Dorsolateral prefrontal cortex (tissue), 120 donors: ENCODE measurements at regions of chr15 and their contacts with region 1.

Region 1: DNA sequence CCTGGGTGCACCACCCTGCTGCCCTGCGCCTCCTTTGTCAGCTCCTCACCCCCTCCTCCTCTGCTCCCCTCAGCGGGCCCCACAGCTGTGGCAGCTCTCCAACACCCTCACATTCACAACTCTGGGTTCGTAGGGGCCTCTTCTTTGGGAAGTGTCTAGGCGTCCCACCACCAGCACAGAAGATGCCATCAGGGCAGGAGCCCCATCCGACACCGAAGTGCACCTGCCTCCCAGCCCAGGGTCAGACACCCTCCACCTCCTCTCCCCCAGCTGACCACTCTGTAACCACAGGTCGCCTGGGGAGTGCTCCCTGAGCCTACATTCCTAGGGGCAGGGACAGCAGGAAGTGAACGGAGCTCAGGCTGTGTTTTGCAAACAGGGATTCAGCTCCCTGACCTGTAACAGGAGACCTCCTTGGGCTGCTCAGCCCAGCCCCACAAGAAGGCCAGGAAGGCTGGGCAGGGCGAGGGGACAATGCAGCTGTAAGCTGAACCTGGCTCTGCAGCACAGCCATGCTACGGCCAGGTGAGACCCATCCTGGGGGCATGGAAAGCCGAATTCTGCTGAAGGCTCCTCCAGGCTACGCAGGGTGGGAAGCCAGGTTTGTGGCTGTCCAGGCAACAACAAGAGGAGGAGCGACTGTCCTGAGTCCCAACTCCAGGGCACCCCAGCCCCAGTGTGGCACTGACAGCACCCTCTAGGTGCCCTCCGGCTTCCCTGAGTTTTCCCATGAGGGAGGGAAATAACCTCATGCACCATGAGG is 269.0 kb downstream of the GOLGA6L6 start:
- DNase-seq: peak in 3 of 10 donors; percentile 41 to 54 (median 48)
- H3K4me3 ChIP-seq: no peak overlapping the region
- H3K27ac ChIP-seq: no peak overlapping the region
- H3K27me3 ChIP-seq: peaks cover 0 to 100% (median 53%) of the 10 kb centered on the region in 45 donors
- CTCF ChIP-seq: no peak

Region 2: GRCh38 chr15:20340931-20341661 is 68.5 kb after region 1 on chr15:
- intact Hi-C with region 1: no loop called
- DNase-seq: peak; percentile 62 to 99 (median 82)
- H3K4me3 ChIP-seq: no peak overlapping the region
- H3K27ac ChIP-seq: no peak overlapping the region
- H3K27me3 ChIP-seq: peaks cover 0 to 41% (median 1%) of the 10 kb centered on the region in 45 donors
- CTCF ChIP-seq: no peak

Region 3: GRCh38 chr15:20376872-20377271 is 104.3 kb after region 1 on chr15:
- intact Hi-C with region 1: loop called in 1 of 2 experiments (anchors 10 kb)
- DNase-seq: no peak
- H3K4me3 ChIP-seq: no peak overlapping the region
- H3K27ac ChIP-seq: peak overlapping the region in 5 of 59 donors; percentile 5 to 33 (median 8)
- H3K27me3 ChIP-seq: peaks cover 0 to 73% (median 4%) of the 10 kb centered on the region in 45 donors
- CTCF ChIP-seq: no peak

Region 4: GRCh38 chr15:20645956-20646355 is 373.4 kb after region 1 on chr15:
- intact Hi-C with region 1: no loop called
- DNase-seq: peak in 3 of 10 donors; percentile 45 to 49 (median 47)
- H3K4me3 ChIP-seq: peak overlapping the region in 1 of 59 donors; percentile 3
- H3K27ac ChIP-seq: no peak overlapping the region
- H3K27me3 ChIP-seq: peaks cover 0 to 90% (median 32%) of the 10 kb centered on the region in 45 donors
- CTCF ChIP-seq: no peak